ENCODE measurements at regions of chr11 and their contacts with region 1.

Region 1: GRCh38 chr11:46238967-46239800 is 38.3 kb upstream of the CREB3L1 start:
- DNase-seq: peak; percentile 96

Region 2: DNA sequence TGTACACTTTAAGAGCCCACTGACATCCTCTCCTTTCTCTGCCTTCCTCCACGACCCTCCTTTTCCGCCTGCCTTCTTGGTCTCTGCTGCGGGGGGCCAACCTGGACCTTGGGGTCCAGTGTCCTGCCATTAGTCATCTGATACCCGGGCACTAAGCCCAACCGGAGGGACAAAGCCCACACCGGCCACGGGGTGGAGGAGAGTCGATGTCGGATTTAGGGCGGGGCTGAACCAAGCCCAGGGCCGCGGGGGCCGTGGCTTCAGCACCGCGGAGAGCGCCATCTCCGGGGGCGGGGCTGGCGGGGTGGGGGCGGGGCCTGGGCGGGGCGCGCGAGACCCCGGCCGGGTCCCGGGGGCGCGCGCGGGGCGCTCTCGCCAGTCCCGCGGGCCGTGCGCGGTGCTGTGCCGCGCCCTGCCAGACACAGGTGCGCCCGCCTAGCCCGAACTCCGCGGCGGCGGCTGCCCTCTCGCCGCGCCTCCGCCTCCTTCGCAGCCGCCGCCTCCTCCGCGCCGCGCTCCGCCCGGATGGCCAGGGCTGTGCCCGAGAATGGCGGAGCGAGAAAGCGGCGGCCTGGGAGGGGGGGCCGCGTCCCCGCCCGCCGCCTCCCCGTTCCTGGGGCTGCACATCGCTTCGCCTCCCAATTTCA is 353.8 kb before region 1 on chr11 and contains the start of gene MAPK8IP1:
- intact Hi-C with region 1: no loop called
- DNase-seq: no peak
- total RNA-seq, gene MAPK8IP1: 8.5 to 10.9 TPM

Region 3: GRCh38 chr11:46278387-46279125 is 39.4 kb after region 1 on chr11:
- intact Hi-C with region 1: loop called in 1 of 2 experiments (anchors 5 kb)
- DNase-seq: peak; percentile 87

Region 4: GRCh38 chr11:46308631-46309419 is 69.6 kb after region 1 on chr11:
- intact Hi-C with region 1: loop called (anchors 2 to 5 kb)
- DNase-seq: peak; percentile 95